ENCODE measurements at regions of chr17 and their contacts with region 1.

Region 1: DNA sequence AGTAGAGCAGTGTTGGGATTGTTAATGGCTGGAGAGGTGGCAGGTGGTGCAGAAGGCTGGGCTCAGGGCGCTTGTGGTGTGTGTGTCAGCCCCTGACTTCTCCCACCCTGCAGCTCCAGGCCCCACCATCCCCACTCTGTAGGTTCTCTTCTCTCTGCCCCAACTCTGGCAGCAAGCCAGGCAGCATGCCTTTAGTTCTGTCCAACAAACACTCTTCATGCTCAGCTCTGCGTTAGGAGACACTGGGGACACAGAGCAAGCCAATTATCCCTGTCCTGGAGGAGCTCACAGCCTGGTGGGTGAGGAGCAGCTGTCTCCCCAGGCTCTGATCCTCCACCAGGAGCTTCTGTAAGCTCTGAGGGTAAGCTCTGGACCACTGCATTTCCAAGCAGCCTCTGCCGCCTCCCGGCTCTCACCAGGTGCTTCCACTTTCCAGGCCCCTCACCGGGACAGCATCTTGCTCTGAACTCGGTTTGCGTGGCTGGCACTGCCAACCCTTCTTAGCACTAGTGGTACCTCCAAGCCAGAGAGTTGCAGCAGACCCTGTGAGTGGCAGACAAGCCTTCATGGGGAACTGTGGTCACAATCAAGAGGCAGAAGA is 34.3 kb upstream of the WSCD1 start:
- DNase-seq: no peak
- ATAC-seq: no peak
- H3K4me3 ChIP-seq: no peak overlapping the region
- H3K27ac ChIP-seq: no peak overlapping the region
- H3K4me1 ChIP-seq: no peaks in the 10 kb centered on the region
- H3K27me3 ChIP-seq: peaks cover 0 to 9% (median 0%) of the 10 kb centered on the region in 3 donors
- CTCF ChIP-seq: no peak

Region 2: GRCh38 chr17:6241996-6242395 is 206.1 kb after region 1 on chr17:
- intact Hi-C with region 1: loop called in 1 of 2 experiments (anchors 5 kb)
- DNase-seq: no peak
- ATAC-seq: no peak
- H3K4me3 ChIP-seq: no peak overlapping the region
- H3K27ac ChIP-seq: no peak overlapping the region
- H3K4me1 ChIP-seq: no peaks in the 10 kb centered on the region
- H3K27me3 ChIP-seq: peaks cover 0 to 28% (median 11%) of the 10 kb centered on the region in 3 donors
- CTCF ChIP-seq: no peak

Measured in psoas muscle (tissue), 8 donors.